GM10248 (cell line): ENCODE measurements at regions of chr6 and their contacts with region 1.

Region 1: DNA sequence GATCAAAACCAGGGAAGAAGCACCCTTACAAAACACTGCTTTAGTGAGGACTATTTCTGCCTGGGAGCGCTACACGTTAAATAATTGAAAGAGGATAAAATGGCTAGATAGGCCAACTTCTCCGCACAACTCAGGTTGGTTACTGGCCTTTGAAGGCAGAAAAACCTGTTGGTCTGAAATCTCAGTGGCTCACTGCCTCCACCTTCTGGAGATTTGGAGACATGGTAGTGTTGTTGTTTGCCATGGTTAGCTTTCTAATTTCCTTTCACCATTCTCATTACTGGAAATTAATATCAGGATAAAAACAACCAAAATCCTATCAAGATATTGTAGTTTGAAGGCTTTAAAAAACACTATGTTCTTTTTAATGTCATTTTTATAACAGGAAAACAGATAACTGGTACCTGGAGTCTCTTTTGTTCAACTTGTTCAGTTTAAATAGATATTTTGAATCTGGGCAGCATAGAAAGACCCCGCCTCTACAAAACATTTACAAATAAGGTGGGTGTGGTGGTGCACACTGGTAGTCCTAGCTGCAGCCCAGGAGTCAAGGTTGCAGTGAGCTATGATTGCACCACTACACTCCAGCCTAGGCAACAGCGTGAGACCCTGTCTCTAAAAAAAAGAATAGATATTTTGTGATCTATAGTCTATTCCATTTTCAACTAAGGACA is 27.5 kb upstream of the BCLAF1 start:
- DNase-seq: peak; percentile 59
- CTCF ChIP-seq: peak; percentile 74

Region 2: DNA sequence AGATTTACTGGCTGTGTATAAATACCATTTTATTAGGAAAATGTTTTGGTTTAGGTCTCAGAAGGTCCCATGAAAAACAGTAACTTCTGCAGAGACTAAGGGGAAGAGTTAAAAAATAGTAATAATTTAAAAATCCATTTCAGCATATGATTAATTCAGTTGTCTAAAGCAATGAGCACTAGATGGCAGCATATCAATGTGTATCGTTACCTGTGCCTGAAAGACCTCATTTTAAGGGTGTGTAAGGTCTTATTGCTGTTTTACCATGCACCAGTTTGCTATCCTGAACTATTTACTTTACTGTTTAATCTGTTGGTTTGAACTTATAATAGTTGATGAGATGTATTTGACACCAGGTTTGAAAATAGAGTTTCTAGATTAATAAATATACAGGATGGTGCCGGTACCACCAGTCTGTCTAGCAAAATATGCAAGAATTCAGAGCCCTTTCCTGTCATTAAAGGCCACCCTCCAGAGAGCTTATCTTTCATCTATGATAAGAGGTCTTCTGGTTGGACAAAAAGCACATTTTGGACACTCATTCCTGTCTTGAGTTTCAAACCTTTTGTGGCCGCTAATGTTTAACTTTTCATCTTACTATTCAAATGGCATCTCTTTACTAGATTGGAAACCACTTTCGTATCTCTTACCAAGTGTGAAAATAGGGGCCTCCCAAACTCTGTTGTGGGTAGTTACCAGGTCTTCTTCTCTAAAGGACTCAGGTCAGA is 810.7 kb before region 1 on chr6:
- CTCF ChIA-PET with region 1: interaction called, 12 read pairs
- POLR2A ChIA-PET with region 1: no interaction called
- DNase-seq: peak; percentile 19
- CTCF ChIP-seq: peak; percentile 54

Region 3: GRCh38 chr6:135922174-135922573 is 395.0 kb before region 1 on chr6:
- CTCF ChIA-PET with region 1: no interaction called
- POLR2A ChIA-PET with region 1: no interaction called
- DNase-seq: no peak
- CTCF ChIP-seq: no peak

Region 4: GRCh38 chr6:136306466-136306865 is 10.7 kb before region 1 on chr6:
- CTCF ChIA-PET with region 1: interaction called, 10 read pairs
- POLR2A ChIA-PET with region 1: no interaction called
- DNase-seq: no peak
- CTCF ChIP-seq: no peak

Region 5: DNA sequence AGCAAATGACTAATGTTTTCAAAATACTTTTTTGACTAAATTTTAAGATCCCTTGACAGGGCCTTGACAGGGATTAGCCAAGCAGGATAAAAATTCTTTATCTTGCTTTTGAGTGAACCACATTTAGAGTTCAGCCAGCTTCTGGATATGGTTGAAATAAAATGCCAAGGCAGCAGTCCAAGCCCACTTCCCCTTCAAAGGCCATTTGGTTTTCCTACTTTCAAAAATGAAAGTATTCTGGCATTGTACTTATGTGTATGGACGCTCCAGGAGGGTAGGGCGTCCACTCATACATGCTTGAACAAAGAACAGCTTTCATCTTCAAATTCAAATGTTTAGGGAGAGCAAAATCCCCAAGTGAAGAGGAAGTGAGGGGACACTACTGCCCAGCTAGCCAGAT is 54.8 kb after region 1 on chr6:
- CTCF ChIA-PET with region 1: no interaction called
- POLR2A ChIA-PET with region 1: no interaction called
- DNase-seq: no peak
- CTCF ChIP-seq: no peak

Region 6: DNA sequence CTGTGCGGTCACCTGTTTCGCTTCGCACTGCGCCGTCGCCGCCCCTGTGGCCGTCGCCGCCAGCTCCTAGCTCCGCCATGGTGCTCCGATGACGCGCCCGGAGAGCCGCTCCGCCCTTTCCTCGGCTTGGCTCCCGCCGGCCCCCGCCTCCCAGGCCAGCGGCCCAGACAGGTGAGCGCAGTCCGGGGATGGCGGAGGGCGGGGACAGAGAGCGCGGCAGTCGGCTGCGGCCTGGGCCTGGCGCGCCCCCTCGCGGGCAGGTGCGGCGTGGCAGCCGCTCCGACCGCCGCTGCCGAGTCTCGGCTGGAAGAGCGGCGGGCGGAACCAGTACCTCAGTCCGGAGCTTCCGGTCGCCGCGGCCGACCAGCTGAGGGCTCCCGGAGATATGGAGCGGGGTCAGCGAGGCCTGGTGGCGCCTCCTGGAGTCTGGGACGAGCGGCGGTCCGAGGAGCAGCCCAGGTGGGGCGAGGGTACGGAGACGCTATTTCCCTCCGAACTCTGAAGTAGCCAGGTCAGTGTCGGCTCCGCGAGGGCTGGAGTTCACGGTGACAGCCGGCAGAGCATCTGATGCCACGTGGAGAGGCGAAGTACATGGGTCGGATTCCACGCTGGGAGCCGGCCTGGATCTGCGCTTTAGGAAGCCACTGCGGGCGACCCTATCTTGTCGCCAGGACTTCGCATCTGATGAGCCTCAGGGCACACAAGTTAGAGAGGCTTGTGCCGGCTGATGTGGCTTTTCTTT is 233.3 kb after region 1 on chr6 and contains the start of gene MAP7:
- CTCF ChIA-PET with region 1: no interaction called
- POLR2A ChIA-PET with region 1: no interaction called
- DNase-seq: peak; percentile 86
- CTCF ChIP-seq: peak; percentile 89